Activated naive CD4-positive, alpha-beta T cell treated with anti-CD3 and anti-CD28 coated beads for 36 hours (primary cell): ENCODE measurements at regions of chr1 and their contacts with region 1.

Region 1: GRCh38 chr1:66282343-66282852 is 251.6 kb upstream of the SGIP1 start:
- DNase-seq: peak; percentile 89
- H3K4me3 Mint-ChIP-seq: peak overlapping the region; percentile 17
- H3K27ac Mint-ChIP-seq: peak overlapping the region; percentile 89
- H3K4me1 Mint-ChIP-seq: peaks cover 87% of the 10 kb centered on the region
- H3K27me3 Mint-ChIP-seq: no peaks in the 10 kb centered on the region

Region 2: DNA sequence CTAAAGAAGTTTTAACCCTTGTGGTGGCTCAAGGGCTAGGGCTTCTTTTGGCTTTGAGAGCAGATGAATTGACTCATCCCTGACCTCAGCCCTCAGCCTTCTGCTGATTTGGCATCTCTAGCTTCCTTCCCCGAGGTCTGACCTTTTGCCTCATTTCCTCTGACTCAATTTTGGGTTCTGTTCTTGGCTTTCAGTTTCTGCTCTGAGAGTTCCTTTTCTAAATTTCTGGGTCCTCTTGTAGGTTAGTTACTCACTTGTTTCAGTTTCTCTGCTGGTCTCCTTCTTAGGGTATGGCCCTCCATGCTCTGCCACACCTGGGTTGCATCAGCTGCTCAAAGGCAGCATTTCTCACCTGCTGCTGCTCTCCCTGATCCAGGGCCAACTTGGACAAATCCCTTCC is 470.3 kb before region 1 on chr1:
- CTCF ChIA-PET with region 1: no interaction called
- intact Hi-C with region 1: loop called (anchors 1 kb)
- DNase-seq: peak; percentile 78
- H3K4me3 Mint-ChIP-seq: no peak overlapping the region
- H3K27ac Mint-ChIP-seq: peak overlapping the region; percentile 36
- H3K4me1 Mint-ChIP-seq: peaks cover 12% of the 10 kb centered on the region
- H3K27me3 Mint-ChIP-seq: peaks cover 31% of the 10 kb centered on the region

Region 3: DNA sequence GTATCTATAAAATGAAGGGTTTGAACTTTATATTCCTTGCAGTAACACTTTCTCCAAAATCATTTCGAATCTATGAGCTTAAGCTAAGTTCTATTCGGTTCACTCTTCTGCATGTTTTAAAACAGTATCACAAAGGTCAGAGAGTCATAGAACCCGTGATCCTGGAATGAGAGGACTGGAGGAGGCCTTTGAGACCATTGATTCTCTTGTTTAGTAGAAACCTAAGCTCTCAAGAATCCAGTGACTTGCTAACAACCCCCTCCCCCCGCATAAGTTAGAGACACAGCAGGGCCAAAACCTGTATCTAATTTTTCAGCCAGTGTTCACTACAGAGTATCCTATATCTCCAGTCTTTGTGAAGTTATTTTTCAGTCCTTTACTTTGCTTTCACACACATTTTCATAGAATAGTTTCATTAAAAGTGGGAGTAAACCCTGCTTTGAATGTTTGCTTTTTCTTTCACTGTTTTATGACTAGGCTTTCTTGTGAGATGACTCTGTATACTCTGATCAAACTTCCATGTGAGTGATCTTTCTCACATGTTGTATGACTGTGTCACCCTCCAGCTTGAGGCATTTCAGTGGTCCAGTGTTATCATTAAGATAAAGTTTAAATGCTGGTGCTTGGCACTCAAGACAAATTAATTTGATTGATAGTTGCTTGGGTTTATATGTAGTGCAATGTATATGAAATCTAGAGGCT is 23.8 kb before region 1 on chr1:
- CTCF ChIA-PET with region 1: interaction called, 21 read pairs
- intact Hi-C with region 1: loop called (anchors 1 kb)
- DNase-seq: peak; percentile 43
- H3K4me3 Mint-ChIP-seq: no peak overlapping the region
- H3K27ac Mint-ChIP-seq: peak overlapping the region; percentile 3
- H3K4me1 Mint-ChIP-seq: peaks cover 84% of the 10 kb centered on the region
- H3K27me3 Mint-ChIP-seq: no peaks in the 10 kb centered on the region

Region 4: DNA sequence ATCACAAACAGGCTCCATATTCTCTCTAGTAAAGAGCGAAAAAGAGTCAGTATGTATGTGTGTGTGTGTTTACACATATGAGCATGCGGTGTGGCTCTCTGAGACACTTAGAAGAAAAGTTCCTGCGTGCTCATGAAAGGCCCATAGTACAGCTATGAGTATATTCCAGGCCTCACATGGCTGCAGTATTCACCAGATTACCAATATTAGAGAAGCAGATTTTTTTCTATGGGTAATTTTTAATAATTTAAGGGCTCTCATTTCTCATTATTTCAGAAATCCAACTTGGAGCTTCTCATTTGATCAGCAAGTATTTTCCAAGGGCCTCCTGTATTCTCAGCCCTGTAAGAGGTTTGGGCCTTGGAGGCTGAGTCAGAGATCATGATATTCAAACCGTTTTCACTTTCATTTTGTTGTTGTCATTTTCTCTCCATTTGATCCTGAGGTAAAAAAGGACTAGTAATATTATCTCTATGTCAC is 18.6 kb after region 1 on chr1:
- CTCF ChIA-PET with region 1: interaction called, 4 read pairs
- intact Hi-C with region 1: loop called (anchors 1 kb)
- DNase-seq: peak; percentile 54
- H3K4me3 Mint-ChIP-seq: peak overlapping the region; percentile 40
- H3K27ac Mint-ChIP-seq: peak overlapping the region; percentile 69
- H3K4me1 Mint-ChIP-seq: peaks cover 38% of the 10 kb centered on the region
- H3K27me3 Mint-ChIP-seq: no peaks in the 10 kb centered on the region

Region 5: GRCh38 chr1:66402194-66402593 is 119.8 kb after region 1 on chr1:
- CTCF ChIA-PET with region 1: no interaction called
- intact Hi-C with region 1: loop called (anchors 1 kb)
- DNase-seq: no peak
- H3K4me3 Mint-ChIP-seq: no peak overlapping the region
- H3K27ac Mint-ChIP-seq: no peak overlapping the region
- H3K4me1 Mint-ChIP-seq: peaks cover 32% of the 10 kb centered on the region
- H3K27me3 Mint-ChIP-seq: no peaks in the 10 kb centered on the region

Region 6: GRCh38 chr1:66929999-66930822 is 647.8 kb after region 1 on chr1:
- CTCF ChIA-PET with region 1: no interaction called
- intact Hi-C with region 1: loop called (anchors 10 kb)
- DNase-seq: peak; percentile 92
- H3K4me3 Mint-ChIP-seq: peak overlapping the region; percentile 84
- H3K27ac Mint-ChIP-seq: peak overlapping the region; percentile 92
- H3K4me1 Mint-ChIP-seq: peaks cover 51% of the 10 kb centered on the region
- H3K27me3 Mint-ChIP-seq: no peaks in the 10 kb centered on the region

Region 7: GRCh38 chr1:67332653-67333529 is 1050.5 kb after region 1 on chr1:
- CTCF ChIA-PET with region 1: no interaction called
- intact Hi-C with region 1: loop called (anchors 1 kb)
- DNase-seq: peak; percentile 67
- H3K4me3 Mint-ChIP-seq: no peak overlapping the region
- H3K27ac Mint-ChIP-seq: peak overlapping the region; percentile 97
- H3K4me1 Mint-ChIP-seq: peaks cover 79% of the 10 kb centered on the region
- H3K27me3 Mint-ChIP-seq: no peaks in the 10 kb centered on the region